ENCODE measurements at regions of chr2 and their contacts with region 1.

Region 1: GRCh38 chr2:45935791-45936622 is 284.5 kb downstream of the PRKCE start:
- DNase-seq: peak; percentile 99
- ATAC-seq: peak; percentile 69
- H3K4me3 ChIP-seq: no peak overlapping the region
- H3K27ac ChIP-seq: peak overlapping the region; percentile 13
- H3K4me1 ChIP-seq: peaks cover 16% of the 10 kb centered on the region
- H3K27me3 ChIP-seq: no peaks in the 10 kb centered on the region
- CTCF ChIP-seq: peak; percentile 95
- POLR2A ChIP-seq: no peak
- RAD21 ChIP-seq: peak; percentile 95

Region 2: DNA sequence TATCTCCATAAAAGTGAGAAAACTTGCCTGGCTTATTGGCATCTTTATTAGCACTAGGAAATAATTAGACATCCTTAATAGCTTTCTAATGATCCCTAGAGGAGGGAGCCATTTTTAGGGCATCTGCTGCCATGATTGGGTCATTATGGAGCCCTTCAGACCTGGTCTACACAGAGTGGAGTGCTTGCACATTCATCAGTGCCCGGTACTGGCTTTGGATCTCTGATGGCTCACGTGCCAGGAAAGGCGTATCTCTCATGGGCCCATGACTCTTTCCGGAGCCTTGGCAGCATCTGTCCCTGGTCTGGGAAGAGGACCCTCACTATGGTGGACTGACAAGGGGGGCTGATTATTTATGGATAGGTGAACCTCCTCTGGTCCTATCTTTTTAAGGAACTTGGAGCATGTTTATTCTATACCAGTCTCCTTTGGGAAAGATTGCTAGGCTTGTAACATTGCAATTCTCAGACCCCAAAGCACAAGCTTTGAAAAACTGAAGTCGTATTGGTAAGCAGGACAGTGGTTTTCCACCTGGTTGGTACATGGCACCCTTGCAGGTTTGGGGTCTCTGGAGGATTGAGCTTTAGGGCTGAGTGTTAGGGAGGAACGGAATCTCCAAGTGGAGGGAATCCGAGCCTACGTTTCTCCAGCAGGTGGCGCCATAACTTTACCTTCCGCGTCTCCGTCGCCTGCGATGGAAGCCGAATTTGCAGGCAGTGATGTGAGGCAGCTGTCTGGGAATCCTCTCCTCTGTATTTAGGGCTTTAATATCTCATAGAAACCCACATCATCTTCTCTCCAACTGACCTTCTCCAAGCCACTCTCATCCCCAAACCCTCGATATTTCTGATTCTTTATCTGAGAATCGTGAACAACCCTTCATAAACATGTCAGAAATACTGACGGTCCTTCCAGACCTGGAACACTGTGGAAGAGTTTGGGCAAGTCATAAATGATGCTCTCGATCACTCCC is 954.6 kb before region 1 on chr2:
- CTCF ChIA-PET with region 1: no interaction called
- POLR2A ChIA-PET with region 1: no interaction called
- dilution Hi-C with region 1: no loop called
- in situ Hi-C with region 1: no loop called
- intact Hi-C with region 1: loop called (anchors 10 kb)
- DNase-seq: peak; percentile 73
- ATAC-seq: peak; percentile 92
- H3K4me3 ChIP-seq: no peak overlapping the region
- H3K27ac ChIP-seq: no peak overlapping the region
- H3K4me1 ChIP-seq: no peaks in the 10 kb centered on the region
- H3K27me3 ChIP-seq: peaks cover 28% of the 10 kb centered on the region
- CTCF ChIP-seq: peak; percentile 88
- POLR2A ChIP-seq: 0 out of 2 replicates have a peak, but pooled peaks have one; percentile 33
- RAD21 ChIP-seq: peak; percentile 97

Region 3: GRCh38 chr2:45643543-45644542 is 292.2 kb before region 1 on chr2:
- CTCF ChIA-PET with region 1: interaction called, 3 read pairs
- POLR2A ChIA-PET with region 1: no interaction called
- dilution Hi-C with region 1: loop called (anchors 25 kb)
- in situ Hi-C with region 1: loop called (anchors 5 kb)
- intact Hi-C with region 1: loop called (anchors 1 kb)
- DNase-seq: peak; percentile 31
- ATAC-seq: peak; percentile 99
- H3K4me3 ChIP-seq: peak overlapping the region; percentile 67
- H3K27ac ChIP-seq: peak overlapping the region; percentile 50; the same call in 1 of the 2 replicates
- H3K4me1 ChIP-seq: peaks cover 2% of the 10 kb centered on the region; the same call in 1 of the 2 replicates
- H3K27me3 ChIP-seq: peaks cover 34% of the 10 kb centered on the region
- CTCF ChIP-seq: peak; percentile 97
- POLR2A ChIP-seq: 0 out of 2 replicates have a peak, but pooled peaks have one; percentile 42
- RAD21 ChIP-seq: peak; percentile 99

Region 4: GRCh38 chr2:45778720-45779171 is 157.3 kb before region 1 on chr2:
- CTCF ChIA-PET with region 1: interaction called, 4 read pairs
- POLR2A ChIA-PET with region 1: no interaction called
- dilution Hi-C with region 1: no loop called
- in situ Hi-C with region 1: loop called (anchors 10 kb)
- intact Hi-C with region 1: loop called (anchors 5 kb)
- DNase-seq: peak; percentile 63
- ATAC-seq: peak; percentile 72
- H3K4me3 ChIP-seq: no peak overlapping the region
- H3K27ac ChIP-seq: no peak overlapping the region
- H3K4me1 ChIP-seq: no peaks in the 10 kb centered on the region; the same call in 1 of the 2 replicates
- H3K27me3 ChIP-seq: no peaks in the 10 kb centered on the region
- CTCF ChIP-seq: peak; percentile 62
- POLR2A ChIP-seq: no peak
- RAD21 ChIP-seq: peak; percentile 78

Region 5: DNA sequence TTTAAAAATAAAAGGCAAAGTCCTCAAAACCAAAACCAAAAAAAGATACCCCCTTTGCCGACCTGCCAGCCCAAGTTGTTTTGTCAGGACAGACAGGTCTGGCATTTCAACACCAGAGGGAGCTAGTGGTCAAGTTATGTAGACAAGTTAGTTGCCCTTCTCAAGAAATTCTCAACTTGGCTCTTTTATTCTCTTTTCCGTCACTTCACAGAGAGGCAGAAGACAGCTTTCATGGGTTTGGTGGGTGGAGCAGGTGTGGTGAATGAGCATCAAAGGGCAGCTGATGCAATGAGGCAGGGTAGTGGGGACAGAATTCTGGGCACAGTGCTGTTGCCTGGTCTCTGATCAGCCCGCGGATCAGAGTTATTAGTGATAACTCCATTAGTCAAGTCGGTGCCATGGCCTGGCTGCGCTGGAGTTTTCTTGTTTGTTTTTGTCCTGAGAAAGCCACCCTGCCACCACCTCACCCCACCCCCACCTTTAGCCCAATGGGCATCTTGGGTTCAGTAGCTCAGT is 57.5 kb after region 1 on chr2:
- CTCF ChIA-PET with region 1: no interaction called
- POLR2A ChIA-PET with region 1: no interaction called
- dilution Hi-C with region 1: no loop called
- in situ Hi-C with region 1: no loop called
- intact Hi-C with region 1: loop called (anchors 1 kb)
- DNase-seq: peak; percentile 89
- ATAC-seq: peak; percentile 73
- H3K4me3 ChIP-seq: no peak overlapping the region
- H3K27ac ChIP-seq: peak overlapping the region; percentile 8; the same call in 1 of the 2 replicates
- H3K4me1 ChIP-seq: peaks cover 19% of the 10 kb centered on the region
- H3K27me3 ChIP-seq: no peaks in the 10 kb centered on the region
- CTCF ChIP-seq: peak; percentile 85
- POLR2A ChIP-seq: no peak
- RAD21 ChIP-seq: peak; percentile 92

Measured in IMR-90 (cell line).